ENCODE measurements at regions of chr3 and their contacts with region 1.

Region 1: GRCh38 chr3:73502609-73503583 is 121.8 kb downstream of the PDZRN3 start:
- DNase-seq: peak; percentile 58
- ATAC-seq: no peak
- H3K4me3 ChIP-seq: no peak overlapping the region
- H3K4me3 Mint-ChIP-seq: no peak overlapping the region
- H3K27ac ChIP-seq: no peak overlapping the region
- H3K27ac Mint-ChIP-seq: no peak overlapping the region
- H3K4me1 ChIP-seq: no peaks in the 10 kb centered on the region
- H3K4me1 Mint-ChIP-seq: no peaks in the 10 kb centered on the region
- H3K27me3 ChIP-seq: peaks cover 0 to 2% (median 0%) of the 10 kb centered on the region in 4 experiments
- H3K27me3 Mint-ChIP-seq: peaks cover 25% of the 10 kb centered on the region
- CTCF ChIP-seq: peak; percentile 81

Region 2: GRCh38 chr3:73100741-73101559 is 401.9 kb before region 1 on chr3:
- CTCF ChIA-PET with region 1: interaction called, 44 read pairs
- POLR2A ChIA-PET with region 1: no interaction called
- intact Hi-C with region 1: no loop called
- DNase-seq: peak; percentile 75
- ATAC-seq: peak; percentile 73
- H3K4me3 ChIP-seq: no peak overlapping the region
- H3K4me3 Mint-ChIP-seq: no peak overlapping the region
- H3K27ac ChIP-seq: no peak overlapping the region
- H3K27ac Mint-ChIP-seq: no peak overlapping the region
- H3K4me1 ChIP-seq: no peaks in the 10 kb centered on the region
- H3K4me1 Mint-ChIP-seq: no peaks in the 10 kb centered on the region
- H3K27me3 ChIP-seq: peaks cover 0 to 4% (median 0%) of the 10 kb centered on the region in 4 experiments
- H3K27me3 Mint-ChIP-seq: peaks cover 9% of the 10 kb centered on the region
- CTCF ChIP-seq: peak; percentile 96